PC-3 (cell line): ENCODE measurements at regions of chr3 and their contacts with region 1.

Region 1: GRCh38 chr3:27484015-27484844 is at the start of gene SLC4A7:
- DNase-seq: peak; percentile 97
- ATAC-seq: peak; percentile 85
- H3K4me3 ChIP-seq: peak within 1 kb of the TSS; percentile 88
- H3K27ac ChIP-seq: peak within 1 kb of the TSS; percentile 59
- H3K4me1 ChIP-seq: peaks cover 33% of the 10 kb centered on the region
- H3K27me3 ChIP-seq: no peaks in the 10 kb centered on the region
- CTCF ChIP-seq: no peak
- total RNA-seq, gene SLC4A7: 56.0 and 59.7 TPM in 2 replicates

Region 2: GRCh38 chr3:27431116-27431515 is 53.1 kb before region 1 on chr3:
- CTCF ChIA-PET with region 1: no interaction called
- POLR2A ChIA-PET with region 1: no interaction called
- intact Hi-C with region 1: no loop called
- DNase-seq: peak; percentile 98
- ATAC-seq: peak; percentile 97
- H3K4me3 ChIP-seq: no peak overlapping the region
- H3K27ac ChIP-seq: peak overlapping the region; percentile 53
- H3K4me1 ChIP-seq: peaks cover 17% of the 10 kb centered on the region
- H3K27me3 ChIP-seq: no peaks in the 10 kb centered on the region
- CTCF ChIP-seq: no peak

Region 3: DNA sequence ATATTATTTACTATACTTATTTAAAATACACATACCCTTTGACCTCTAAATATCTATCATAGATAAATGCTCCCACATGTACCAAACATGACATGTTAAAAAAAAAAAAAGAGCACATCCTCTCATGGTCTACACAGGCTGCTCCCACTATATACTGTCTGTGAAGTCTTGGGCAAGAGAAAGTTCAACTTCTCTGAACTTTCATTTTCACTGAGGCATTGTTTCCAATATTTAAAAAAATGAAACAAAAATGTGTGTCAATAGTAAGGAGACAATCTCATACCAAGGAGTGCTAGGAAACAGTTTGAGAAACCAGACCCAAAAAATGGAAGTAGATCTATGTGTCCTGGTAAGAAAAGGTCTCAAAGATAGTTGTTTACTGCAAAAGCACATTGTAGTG is 29.3 kb before region 1 on chr3:
- CTCF ChIA-PET with region 1: no interaction called
- POLR2A ChIA-PET with region 1: no interaction called
- intact Hi-C with region 1: no loop called
- DNase-seq: no peak
- ATAC-seq: no peak
- H3K4me3 ChIP-seq: no peak overlapping the region
- H3K27ac ChIP-seq: no peak overlapping the region
- H3K4me1 ChIP-seq: peaks cover 20% of the 10 kb centered on the region
- H3K27me3 ChIP-seq: no peaks in the 10 kb centered on the region
- CTCF ChIP-seq: no peak

Region 4: DNA sequence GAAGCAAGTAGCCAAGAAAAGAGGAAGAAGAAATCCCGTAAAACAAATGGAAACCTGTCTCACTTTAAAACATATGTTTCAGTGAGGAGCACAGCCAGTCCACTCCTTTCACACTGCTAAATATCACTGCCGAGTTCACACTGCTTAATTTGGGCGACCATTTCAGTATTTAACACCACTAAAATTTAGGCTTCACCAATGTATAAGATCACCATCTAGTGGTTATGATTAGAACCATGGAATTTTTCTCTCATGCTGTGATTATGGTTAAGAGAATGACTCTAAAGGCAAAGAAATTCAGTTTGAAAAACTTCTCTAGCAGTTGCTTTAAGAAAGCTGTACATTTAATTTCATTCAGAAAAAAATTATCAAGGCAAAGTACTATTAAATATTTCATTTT is 16.7 kb before region 1 on chr3:
- CTCF ChIA-PET with region 1: interaction called, 3 read pairs
- POLR2A ChIA-PET with region 1: interaction called, 13 read pairs
- intact Hi-C with region 1: no loop called
- DNase-seq: peak; percentile 72
- ATAC-seq: peak; percentile 81
- H3K4me3 ChIP-seq: no peak overlapping the region
- H3K27ac ChIP-seq: no peak overlapping the region
- H3K4me1 ChIP-seq: 0 out of 2 replicates have a peak, but pooled peaks cover 10% of the 10 kb centered on the region
- H3K27me3 ChIP-seq: no peaks in the 10 kb centered on the region
- CTCF ChIP-seq: peak; percentile 79

Region 5: DNA sequence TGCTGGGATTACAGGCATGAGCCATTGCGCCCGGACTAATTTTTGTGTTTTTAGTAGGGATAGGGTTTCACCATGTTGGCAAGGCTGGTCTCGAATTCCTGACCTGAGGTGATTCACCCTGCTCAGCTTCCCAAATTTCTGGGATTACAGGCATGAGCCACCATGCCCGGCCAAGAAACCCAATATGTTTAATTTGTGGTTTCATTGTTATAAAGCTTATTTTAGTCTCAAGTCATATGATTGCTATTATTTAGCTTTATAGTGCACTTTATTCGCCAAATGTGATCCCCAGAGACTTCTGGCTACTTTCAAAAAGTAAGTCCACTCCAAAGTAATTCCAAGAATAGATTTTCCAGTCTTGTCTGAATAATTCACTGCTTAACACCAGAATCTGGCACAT is 19.3 kb after region 1 on chr3:
- CTCF ChIA-PET with region 1: no interaction called
- POLR2A ChIA-PET with region 1: no interaction called
- intact Hi-C with region 1: loop called (anchors 1 kb)
- DNase-seq: peak; percentile 92
- ATAC-seq: peak; percentile 81
- H3K4me3 ChIP-seq: no peak overlapping the region
- H3K27ac ChIP-seq: peak overlapping the region; percentile 57
- H3K4me1 ChIP-seq: peaks cover 36% of the 10 kb centered on the region
- H3K27me3 ChIP-seq: no peaks in the 10 kb centered on the region
- CTCF ChIP-seq: no peak

Region 6: GRCh38 chr3:27628026-27628750 is 144.0 kb after region 1 on chr3:
- CTCF ChIA-PET with region 1: no interaction called
- POLR2A ChIA-PET with region 1: no interaction called
- intact Hi-C with region 1: loop called (anchors 2 kb)
- DNase-seq: peak; percentile 91
- ATAC-seq: peak; percentile 69
- H3K4me3 ChIP-seq: 0 out of 2 replicates have a peak overlapping the region, but pooled peaks have one; percentile 0
- H3K27ac ChIP-seq: peak overlapping the region; percentile 80
- H3K4me1 ChIP-seq: peaks cover 66% of the 10 kb centered on the region
- H3K27me3 ChIP-seq: no peaks in the 10 kb centered on the region
- CTCF ChIP-seq: no peak

Region 7: GRCh38 chr3:27659279-27660021 is 175.2 kb after region 1 on chr3:
- CTCF ChIA-PET with region 1: no interaction called
- POLR2A ChIA-PET with region 1: no interaction called
- intact Hi-C with region 1: loop called (anchors 2 kb)
- DNase-seq: peak; percentile 72
- ATAC-seq: peak; percentile 89
- H3K4me3 ChIP-seq: no peak overlapping the region
- H3K27ac ChIP-seq: no peak overlapping the region
- H3K4me1 ChIP-seq: peaks cover 10% of the 10 kb centered on the region
- H3K27me3 ChIP-seq: no peaks in the 10 kb centered on the region
- CTCF ChIP-seq: peak; percentile 93

Region 8: GRCh38 chr3:27914199-27914598 is 430.0 kb after region 1 on chr3:
- CTCF ChIA-PET with region 1: no interaction called
- POLR2A ChIA-PET with region 1: interaction called, 13 read pairs
- intact Hi-C with region 1: no loop called
- DNase-seq: peak; percentile 32
- ATAC-seq: peak; percentile 67; the same call in 1 of the 2 replicates
- H3K4me3 ChIP-seq: no peak overlapping the region
- H3K27ac ChIP-seq: no peak overlapping the region
- H3K4me1 ChIP-seq: no peaks in the 10 kb centered on the region
- H3K27me3 ChIP-seq: no peaks in the 10 kb centered on the region
- CTCF ChIP-seq: peak; percentile 47